Posterior cingulate gyrus (tissue), 11 donors: ENCODE measurements at regions of chr5 and their contacts with region 1.

Region 1: GRCh38 chr5:69189162-69190086 is at the start of gene CENPH:
- DNase-seq: peak; percentile 80 to 98 (median 88)

Region 2: GRCh38 chr5:69074664-69075521 is 114.5 kb before region 1 on chr5:
- intact Hi-C with region 1: no loop called
- DNase-seq: no peak

Region 3: GRCh38 chr5:69093771-69094482 is 95.5 kb before region 1 on chr5 and contains the start of gene SLC30A5:
- intact Hi-C with region 1: loop called (anchors 10 kb)
- DNase-seq: peak; percentile 98 to 100 (median 99)

Region 4: DNA sequence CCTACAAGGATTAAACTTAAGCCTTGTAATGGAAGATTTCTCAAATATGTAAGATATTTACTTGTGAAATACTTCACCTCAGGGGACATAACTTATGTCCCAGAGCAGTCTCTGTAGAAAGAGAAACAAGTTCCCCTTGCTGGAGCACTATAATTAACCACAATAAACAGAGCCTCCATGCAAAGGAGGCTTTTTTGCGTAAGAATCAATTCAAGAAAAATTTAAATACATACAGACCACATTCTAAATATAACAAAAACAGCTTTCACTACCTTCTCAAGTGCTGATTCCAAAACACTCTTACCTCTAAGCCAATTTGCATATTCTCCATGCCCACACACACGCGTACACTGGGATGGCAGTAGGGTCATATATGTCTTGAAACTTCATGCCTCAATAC is 53.1 kb before region 1 on chr5:
- intact Hi-C with region 1: no loop called
- DNase-seq: peak in 1 of 10 donors; percentile 6

Region 5: DNA sequence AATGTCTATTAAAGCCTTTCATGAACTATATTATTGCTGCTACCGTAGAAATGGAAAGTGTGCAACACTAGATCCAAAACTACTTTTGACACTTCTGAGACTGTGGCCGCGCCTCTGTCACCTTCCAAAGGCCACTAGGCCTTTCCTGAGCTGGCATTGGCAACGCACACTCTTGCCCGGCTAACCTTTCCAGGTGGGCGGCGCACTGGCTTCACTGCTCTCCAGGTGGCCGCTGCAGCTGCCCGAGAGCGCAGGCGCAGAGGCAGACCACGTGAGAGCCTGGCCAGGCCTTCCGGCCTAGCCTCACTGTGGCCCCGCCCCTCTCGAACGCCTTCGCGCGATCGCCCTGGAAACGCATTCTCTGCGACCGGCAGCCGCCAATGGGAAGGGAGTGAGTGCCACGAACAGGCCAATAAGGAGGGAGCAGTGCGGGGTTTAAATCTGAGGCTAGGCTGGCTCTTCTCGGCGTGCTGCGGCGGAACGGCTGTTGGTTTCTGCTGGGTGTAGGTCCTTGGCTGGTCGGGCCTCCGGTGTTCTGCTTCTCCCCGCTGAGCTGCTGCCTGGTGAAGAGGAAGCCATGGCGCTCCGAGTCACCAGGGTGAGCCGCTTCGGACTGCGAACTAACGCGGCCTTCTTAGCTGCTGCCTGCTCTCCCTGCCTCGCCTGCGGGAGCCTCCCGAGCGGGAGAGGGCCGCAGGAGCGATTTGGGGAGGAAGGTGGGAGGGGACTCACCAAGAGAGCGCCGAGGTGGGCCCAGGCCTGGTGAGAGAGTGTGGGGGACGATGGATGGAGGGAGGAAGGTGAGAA is 22.5 kb before region 1 on chr5 and contains the start of gene CCNB1:
- intact Hi-C with region 1: loop called (anchors 2 kb)
- DNase-seq: peak; percentile 97 to 100 (median 99)

Region 6: GRCh38 chr5:69217548-69218526 is 28.4 kb after region 1 on chr5:
- intact Hi-C with region 1: loop called (anchors 2 kb)
- DNase-seq: peak; percentile 94 to 100 (median 96)

Region 7: GRCh38 chr5:69234457-69235268 is 45.2 kb after region 1 on chr5 and contains the start of gene CDK7:
- intact Hi-C with region 1: loop called (anchors 1 kb)
- DNase-seq: peak; percentile 88 to 99 (median 96)

Region 8: GRCh38 chr5:69432412-69433206 is 243.2 kb after region 1 on chr5:
- intact Hi-C with region 1: no loop called
- DNase-seq: no peak